MCF 10A (cell line): ENCODE measurements at regions of chr1 and their contacts with region 1.

Region 1: GRCh38 chr1:18902523-18903290 is at the start of gene ALDH4A1:
- DNase-seq: peak; percentile 99
- H3K4me3 Mint-ChIP-seq: peak within 1 kb of the TSS; percentile 88
- H3K27ac Mint-ChIP-seq: peak within 1 kb of the TSS; percentile 98
- H3K4me1 Mint-ChIP-seq: peaks cover 16% of the 10 kb centered on the region
- H3K27me3 Mint-ChIP-seq: no peaks in the 10 kb centered on the region
- CTCF ChIP-seq: peak; percentile 7
- total RNA-seq, gene ALDH4A1: 5.7 and 6.3 TPM in 2 replicates

Region 2: GRCh38 chr1:18751425-18751824 is 151.3 kb before region 1 on chr1:
- CTCF ChIA-PET with region 1: no interaction called
- POLR2A ChIA-PET with region 1: no interaction called
- intact Hi-C with region 1: no loop called
- DNase-seq: no peak
- H3K4me3 Mint-ChIP-seq: no peak overlapping the region
- H3K27ac Mint-ChIP-seq: no peak overlapping the region
- H3K4me1 Mint-ChIP-seq: no peaks in the 10 kb centered on the region
- H3K27me3 Mint-ChIP-seq: peaks cover 26% of the 10 kb centered on the region
- CTCF ChIP-seq: no peak

Region 3: DNA sequence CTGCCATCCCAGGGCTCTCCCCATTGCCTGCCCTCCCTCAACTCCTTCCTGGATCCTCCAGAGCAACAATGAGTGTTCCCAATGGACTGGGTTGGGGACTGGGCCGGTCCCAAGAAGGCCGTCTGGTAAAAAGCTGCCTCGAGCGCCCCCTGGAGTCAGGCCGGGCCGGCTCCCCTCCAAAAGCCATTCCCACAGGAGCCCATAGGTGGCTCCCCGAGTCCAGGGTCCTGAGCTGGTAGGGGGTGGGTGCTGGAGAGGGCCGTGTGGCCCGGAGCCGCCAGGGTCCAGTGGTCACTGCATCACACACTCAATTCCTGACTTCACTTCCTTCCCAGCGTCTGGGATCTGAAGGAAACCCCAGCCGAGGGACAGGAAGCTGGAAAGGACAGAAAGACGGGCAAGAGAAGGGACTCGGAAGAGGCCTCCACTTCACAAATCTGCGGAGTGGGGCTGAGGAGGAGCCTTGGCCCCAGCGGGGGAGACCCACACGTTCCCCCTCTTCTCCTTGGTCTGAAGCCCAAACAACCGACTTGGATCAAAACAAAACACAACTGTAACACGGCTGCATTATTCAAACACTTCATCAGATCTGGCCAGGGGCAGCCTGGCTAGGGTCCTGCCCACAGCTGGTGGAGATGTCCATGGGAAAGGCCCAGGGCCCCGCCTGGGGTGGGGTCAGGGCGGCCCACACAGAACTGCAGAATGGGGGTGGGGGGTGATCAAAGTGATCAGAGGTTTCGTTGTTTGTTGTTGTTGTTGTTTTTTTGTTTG is 10.5 kb after region 1 on chr1:
- CTCF ChIA-PET with region 1: interaction called, 17 read pairs
- POLR2A ChIA-PET with region 1: interaction called, 6 read pairs
- intact Hi-C with region 1: no loop called
- DNase-seq: peak; percentile 78
- H3K4me3 Mint-ChIP-seq: no peak overlapping the region
- H3K27ac Mint-ChIP-seq: no peak overlapping the region
- H3K4me1 Mint-ChIP-seq: no peaks in the 10 kb centered on the region
- H3K27me3 Mint-ChIP-seq: no peaks in the 10 kb centered on the region
- CTCF ChIP-seq: peak; percentile 99

Region 4: GRCh38 chr1:18956369-18957135 is 53.8 kb after region 1 on chr1 and contains the start of gene IFFO2:
- CTCF ChIA-PET with region 1: interaction called, 7 read pairs
- POLR2A ChIA-PET with region 1: interaction called, 30 read pairs
- intact Hi-C with region 1: no loop called
- DNase-seq: peak; percentile 91
- H3K4me3 Mint-ChIP-seq: peak within 1 kb of the TSS; percentile 74
- H3K27ac Mint-ChIP-seq: no peak within 1 kb of the TSS
- H3K4me1 Mint-ChIP-seq: peaks cover 19% of the 10 kb centered on the region
- H3K27me3 Mint-ChIP-seq: peaks cover 10% of the 10 kb centered on the region
- CTCF ChIP-seq: no peak
- total RNA-seq, gene IFFO2: 10.8 and 21.0 TPM in 2 replicates

Region 5: DNA sequence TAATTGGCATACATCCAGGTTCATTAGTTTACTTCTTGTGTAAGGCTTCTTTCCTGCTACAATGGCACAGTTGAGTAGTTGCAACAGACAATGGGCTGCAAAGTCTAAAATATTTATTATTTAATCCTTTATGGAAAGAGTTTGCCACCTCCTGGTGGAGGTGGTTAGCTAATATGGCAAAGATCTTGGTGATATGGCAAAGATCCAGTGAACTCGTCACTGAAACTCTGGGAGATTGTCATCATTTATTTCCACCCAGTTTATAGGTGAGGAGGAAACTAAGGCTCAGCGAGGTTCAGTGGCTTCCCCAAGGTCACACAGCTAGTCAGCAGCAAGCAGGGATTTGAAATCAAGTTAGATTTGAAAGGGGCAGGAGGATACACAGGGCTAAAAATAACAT is 69.8 kb after region 1 on chr1:
- CTCF ChIA-PET with region 1: interaction called, 14 read pairs
- POLR2A ChIA-PET with region 1: interaction called, 6 read pairs
- intact Hi-C with region 1: no loop called
- DNase-seq: peak; percentile 51
- H3K4me3 Mint-ChIP-seq: no peak overlapping the region
- H3K27ac Mint-ChIP-seq: no peak overlapping the region
- H3K4me1 Mint-ChIP-seq: no peaks in the 10 kb centered on the region
- H3K27me3 Mint-ChIP-seq: no peaks in the 10 kb centered on the region
- CTCF ChIP-seq: peak; percentile 30

Region 6: GRCh38 chr1:19096036-19096833 is 193.5 kb after region 1 on chr1:
- CTCF ChIA-PET with region 1: interaction called, 52 read pairs
- POLR2A ChIA-PET with region 1: interaction called, 8 read pairs
- intact Hi-C with region 1: loop called (anchors 1 kb)
- DNase-seq: peak; percentile 55
- H3K4me3 Mint-ChIP-seq: no peak overlapping the region
- H3K27ac Mint-ChIP-seq: no peak overlapping the region
- H3K4me1 Mint-ChIP-seq: no peaks in the 10 kb centered on the region
- H3K27me3 Mint-ChIP-seq: no peaks in the 10 kb centered on the region
- CTCF ChIP-seq: peak; percentile 57

Region 7: DNA sequence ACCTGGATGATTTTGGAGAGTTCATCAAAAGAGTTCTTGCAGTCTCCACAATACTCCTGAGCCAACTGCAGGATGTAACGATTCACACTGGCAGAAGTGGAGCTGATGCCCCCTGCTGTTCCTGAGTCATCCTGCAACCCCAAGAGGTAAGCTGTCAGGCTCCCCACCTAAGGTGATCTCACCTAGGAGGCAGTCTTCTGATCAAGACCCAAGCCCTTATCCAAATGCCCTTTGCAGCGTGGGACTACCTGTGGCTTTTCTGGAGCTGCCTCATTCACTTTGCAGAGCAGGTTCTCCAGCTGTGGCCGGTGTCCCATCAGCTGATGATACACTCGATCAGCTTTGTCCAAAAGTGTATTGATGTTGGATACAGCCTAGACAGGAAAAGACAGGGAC is 211.0 kb after region 1 on chr1:
- CTCF ChIA-PET with region 1: interaction called, 6 read pairs
- POLR2A ChIA-PET with region 1: no interaction called
- intact Hi-C with region 1: loop called (anchors 1 kb)
- DNase-seq: peak; percentile 54
- H3K4me3 Mint-ChIP-seq: no peak overlapping the region
- H3K27ac Mint-ChIP-seq: no peak overlapping the region
- H3K4me1 Mint-ChIP-seq: no peaks in the 10 kb centered on the region
- H3K27me3 Mint-ChIP-seq: no peaks in the 10 kb centered on the region
- CTCF ChIP-seq: peak; percentile 26